Ascending aorta (tissue), 2 donors: ENCODE measurements at regions of chr4 and their contacts with region 1.

Region 1: DNA sequence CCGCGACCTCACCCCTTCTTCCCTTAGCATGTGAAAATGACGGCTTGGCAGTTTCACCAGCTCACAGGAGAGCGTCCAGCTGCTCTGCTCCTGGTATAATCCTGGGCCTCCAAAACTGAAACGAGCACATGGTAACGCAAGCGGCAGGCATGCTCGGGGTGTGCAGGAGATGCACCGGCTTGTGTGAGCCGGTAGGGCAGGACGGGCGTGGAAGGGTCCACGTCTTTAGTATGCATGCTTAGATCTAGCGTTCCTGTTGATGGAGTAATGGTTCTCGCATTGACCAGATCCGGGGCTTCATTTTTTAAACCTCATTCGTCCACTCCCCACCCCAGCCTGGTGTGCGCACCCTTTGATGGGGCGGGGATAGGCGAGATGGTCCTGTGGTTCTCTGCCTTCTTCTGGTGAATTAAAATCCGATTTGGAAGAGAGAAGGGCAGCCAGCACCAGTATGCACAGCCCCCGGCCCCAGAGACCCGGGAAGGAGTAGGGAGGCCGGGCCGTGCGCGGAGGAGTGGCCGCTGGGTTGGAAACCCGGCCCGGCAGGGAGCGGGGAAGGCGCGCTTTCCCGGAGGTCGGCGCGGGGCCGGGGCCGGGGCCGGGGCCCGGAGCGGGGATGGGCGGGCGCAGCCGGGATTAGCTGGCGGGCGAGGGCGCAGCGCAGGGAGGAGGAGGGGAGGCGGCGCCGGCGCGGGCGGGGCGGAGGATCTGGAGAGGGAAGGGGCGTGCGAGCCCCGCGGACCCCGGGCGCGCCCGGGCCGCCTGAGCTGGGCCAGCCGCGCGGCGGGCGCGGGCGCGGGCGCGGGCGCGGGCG is 39.8 kb downstream of the FAM149A start:
- DNase-seq: peak in 1 of 2 donors; percentile 78
- H3K4me3 ChIP-seq: peak overlapping the region; percentile 71 to 85
- H3K27ac ChIP-seq: peak overlapping the region; percentile 70 to 91
- H3K4me1 ChIP-seq: peaks cover 4 to 6% of the 10 kb centered on the region in 2 donors
- H3K27me3 ChIP-seq: no peaks in the 10 kb centered on the region
- CTCF ChIP-seq: peak in 1 of 3 experiments; percentile 24

Region 2: GRCh38 chr4:185142912-185143595 is 1001.3 kb before region 1 on chr4 and contains the start of gene SLC25A4:
- intact Hi-C with region 1: loop called (anchors 10 kb)
- DNase-seq: peak; percentile 50 to 94
- H3K4me3 ChIP-seq: peak within 1 kb of the TSS; percentile 65 to 87
- H3K27ac ChIP-seq: peak within 1 kb of the TSS; percentile 92 to 93
- H3K4me1 ChIP-seq: peaks cover 3 to 15% of the 10 kb centered on the region in 2 donors
- H3K27me3 ChIP-seq: no peaks in the 10 kb centered on the region
- CTCF ChIP-seq: peak; percentile 44 to 69 (median 58)
- total RNA-seq, gene SLC25A4: 19.6 TPM

Region 3: GRCh38 chr4:186067757-186068385 is 76.5 kb before region 1 on chr4:
- intact Hi-C with region 1: loop called (anchors 2 kb)
- DNase-seq: peak; percentile 12 to 78
- H3K4me3 ChIP-seq: peak overlapping the region; percentile 67 to 73
- H3K27ac ChIP-seq: peak overlapping the region in 1 of 2 donors; percentile 42
- H3K4me1 ChIP-seq: no peaks in the 10 kb centered on the region
- H3K27me3 ChIP-seq: no peaks in the 10 kb centered on the region
- CTCF ChIP-seq: peak in 2 of 3 experiments; percentile 40 to 62

Region 4: DNA sequence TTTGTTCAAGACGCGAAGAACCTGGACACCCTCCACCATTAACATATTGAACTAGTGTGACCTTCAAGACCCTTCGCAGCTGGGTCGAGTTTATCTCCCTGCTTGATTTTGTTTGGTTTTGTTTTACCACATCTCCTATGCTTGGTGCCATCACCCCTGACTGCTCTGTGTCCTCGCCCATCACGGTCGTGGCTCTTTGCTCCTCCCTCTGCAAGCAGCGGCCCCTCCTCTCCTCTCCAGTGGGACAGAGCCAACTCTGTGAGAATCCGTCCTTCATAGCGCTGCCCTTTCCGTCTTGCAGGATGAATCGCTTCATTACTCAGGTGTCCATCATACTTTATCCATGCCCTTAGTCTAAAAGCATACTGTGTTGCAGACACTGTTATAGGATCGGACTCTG is 48.9 kb before region 1 on chr4:
- intact Hi-C with region 1: no loop called
- DNase-seq: no peak
- H3K4me3 ChIP-seq: peak overlapping the region in 1 of 2 donors; percentile 25
- H3K27ac ChIP-seq: no peak overlapping the region
- H3K4me1 ChIP-seq: no peaks in the 10 kb centered on the region
- H3K27me3 ChIP-seq: no peaks in the 10 kb centered on the region
- CTCF ChIP-seq: no peak

Region 5: DNA sequence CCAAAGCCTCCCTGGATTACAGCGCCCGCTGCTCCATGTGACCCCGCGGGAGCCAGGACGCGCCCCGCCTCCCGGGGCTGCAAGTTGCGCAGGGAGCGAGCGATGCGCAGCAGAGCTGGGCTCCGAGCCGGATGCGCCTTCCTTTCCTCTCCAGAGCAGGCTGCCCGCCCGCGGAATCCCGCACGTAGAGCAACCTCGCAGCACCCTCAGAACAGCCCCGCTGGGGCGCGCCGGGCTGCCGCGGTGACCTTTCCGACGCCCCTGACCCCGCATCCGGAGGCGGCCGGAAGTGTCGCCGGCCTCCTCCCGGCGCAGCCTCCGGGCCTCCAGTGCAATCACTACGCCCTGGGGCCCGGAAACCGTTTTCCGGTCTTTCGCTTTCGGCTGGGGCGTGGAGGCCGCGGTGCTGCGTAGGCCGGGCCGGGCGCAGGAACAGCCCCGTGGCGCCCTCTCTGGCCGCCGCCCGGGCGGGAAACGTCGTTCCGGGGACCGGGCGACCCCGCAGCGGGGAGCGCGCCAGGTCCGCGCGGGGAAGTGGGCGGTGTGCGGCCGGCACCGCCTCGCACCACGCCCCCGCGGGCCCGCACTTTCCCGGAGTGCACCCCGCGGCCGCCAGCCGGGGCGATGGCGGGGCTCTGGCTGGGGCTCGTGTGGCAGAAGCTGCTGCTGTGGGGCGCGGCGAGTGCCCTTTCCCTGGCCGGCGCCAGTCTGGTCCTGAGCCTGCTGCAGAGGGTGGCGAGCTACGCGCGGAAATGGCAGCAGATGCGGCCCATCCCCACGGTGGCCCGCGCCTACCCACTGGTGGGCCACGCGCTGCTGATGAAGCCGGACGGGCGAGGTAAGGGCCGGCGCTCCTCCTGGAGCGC is 47.1 kb after region 1 on chr4 and contains the start of gene CYP4V2:
- intact Hi-C with region 1: loop called (anchors 2 kb)
- DNase-seq: peak in 1 of 2 donors; percentile 90
- H3K4me3 ChIP-seq: peak within 1 kb of the TSS; percentile 92 to 97
- H3K27ac ChIP-seq: peak within 1 kb of the TSS; percentile 95 to 97
- H3K4me1 ChIP-seq: peaks cover 0 to 15% of the 10 kb centered on the region in 2 donors
- H3K27me3 ChIP-seq: no peaks in the 10 kb centered on the region
- CTCF ChIP-seq: peak in 2 of 3 experiments; percentile 18 to 21
- total RNA-seq, gene CYP4V2: 14.3 TPM